ENCODE measurements at regions of chr3 and their contacts with region 1.

Region 1: GRCh38 chr3:37986479-37987314 is 3.9 kb upstream of the VILL start:
- DNase-seq: no peak
- CTCF ChIP-seq: no peak

Region 2: DNA sequence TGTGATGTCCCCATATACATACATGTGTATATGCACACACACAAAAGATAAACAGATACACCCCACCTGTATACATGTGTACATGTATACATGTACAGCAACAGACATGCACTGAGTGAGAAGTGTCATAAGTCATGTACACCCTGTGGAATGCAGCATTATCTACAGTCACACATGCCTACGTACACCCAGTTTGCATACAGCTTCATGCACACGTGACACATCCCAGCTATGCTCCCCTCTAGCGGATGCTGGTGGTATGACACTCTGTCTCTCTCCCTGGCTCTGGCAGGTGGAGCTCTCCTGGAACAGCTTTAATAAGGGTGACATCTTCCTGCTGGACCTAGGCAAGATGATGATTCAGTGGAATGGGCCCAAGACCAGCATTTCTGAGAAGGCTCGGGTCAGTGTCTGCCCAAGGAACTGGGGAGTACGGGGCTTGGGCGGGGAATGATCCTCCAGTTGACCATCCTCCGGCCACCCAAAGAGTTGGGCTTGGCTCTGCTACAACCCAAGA is 10.1 kb after region 1 on chr3:
- CTCF ChIA-PET with region 1: interaction called, 11 read pairs
- POLR2A ChIA-PET with region 1: interaction called, 3 read pairs
- DNase-seq: peak; percentile 78
- CTCF ChIP-seq: peak; percentile 90